ENCODE measurements at regions of chr6 and their contacts with region 1.

Region 1: GRCh38 chr6:49531774-49532569 is 18.5 kb upstream of the C6orf141 start:
- DNase-seq: peak in 2 of 3 donors; percentile 8 to 29
- H3K4me3 ChIP-seq: no peak overlapping the region
- H3K4me3 Mint-ChIP-seq: peak overlapping the region in 1 of 2 donors; percentile 56
- H3K27ac ChIP-seq: no peak overlapping the region
- H3K27ac Mint-ChIP-seq: no peak overlapping the region
- H3K4me1 ChIP-seq: no peaks in the 10 kb centered on the region
- H3K4me1 Mint-ChIP-seq: peaks cover 2% of the 10 kb centered on the region
- H3K27me3 ChIP-seq: no peaks in the 10 kb centered on the region
- H3K27me3 Mint-ChIP-seq: peaks cover 1 to 6% (median 2%) of the 10 kb centered on the region in 3 donors
- CTCF ChIP-seq: peak; percentile 80

Region 2: DNA sequence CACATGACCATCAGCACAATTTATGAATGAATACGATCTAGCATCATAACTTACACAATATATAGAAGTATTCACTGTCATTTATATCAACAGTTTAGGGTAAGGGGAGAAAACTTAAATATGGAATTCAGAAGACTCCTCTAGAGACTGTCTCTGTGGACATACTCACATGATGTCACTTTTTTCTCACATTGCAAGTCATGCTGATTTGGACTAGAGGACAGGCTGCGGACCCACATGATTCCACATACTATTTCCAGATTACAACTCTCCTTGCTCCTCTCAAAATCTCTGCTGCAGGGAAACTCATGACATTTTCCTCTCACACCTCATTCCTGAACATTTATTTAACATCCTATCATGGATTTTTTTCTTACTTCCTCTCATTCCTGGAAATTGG is 321.0 kb after region 1 on chr6:
- intact Hi-C with region 1: loop called in 1 of 2 experiments (anchors 5 kb)
- DNase-seq: no peak
- H3K4me3 ChIP-seq: no peak overlapping the region
- H3K4me3 Mint-ChIP-seq: no peak overlapping the region
- H3K27ac ChIP-seq: no peak overlapping the region
- H3K27ac Mint-ChIP-seq: no peak overlapping the region
- H3K4me1 ChIP-seq: no peaks in the 10 kb centered on the region
- H3K4me1 Mint-ChIP-seq: no peaks in the 10 kb centered on the region
- H3K27me3 ChIP-seq: no peaks in the 10 kb centered on the region
- H3K27me3 Mint-ChIP-seq: no peaks in the 10 kb centered on the region
- CTCF ChIP-seq: no peak

Measured in CD14-positive monocyte (primary cell).